Vagina (tissue), 2 donors: ENCODE measurements at regions of chr10 and their contacts with region 1.

Region 1: DNA sequence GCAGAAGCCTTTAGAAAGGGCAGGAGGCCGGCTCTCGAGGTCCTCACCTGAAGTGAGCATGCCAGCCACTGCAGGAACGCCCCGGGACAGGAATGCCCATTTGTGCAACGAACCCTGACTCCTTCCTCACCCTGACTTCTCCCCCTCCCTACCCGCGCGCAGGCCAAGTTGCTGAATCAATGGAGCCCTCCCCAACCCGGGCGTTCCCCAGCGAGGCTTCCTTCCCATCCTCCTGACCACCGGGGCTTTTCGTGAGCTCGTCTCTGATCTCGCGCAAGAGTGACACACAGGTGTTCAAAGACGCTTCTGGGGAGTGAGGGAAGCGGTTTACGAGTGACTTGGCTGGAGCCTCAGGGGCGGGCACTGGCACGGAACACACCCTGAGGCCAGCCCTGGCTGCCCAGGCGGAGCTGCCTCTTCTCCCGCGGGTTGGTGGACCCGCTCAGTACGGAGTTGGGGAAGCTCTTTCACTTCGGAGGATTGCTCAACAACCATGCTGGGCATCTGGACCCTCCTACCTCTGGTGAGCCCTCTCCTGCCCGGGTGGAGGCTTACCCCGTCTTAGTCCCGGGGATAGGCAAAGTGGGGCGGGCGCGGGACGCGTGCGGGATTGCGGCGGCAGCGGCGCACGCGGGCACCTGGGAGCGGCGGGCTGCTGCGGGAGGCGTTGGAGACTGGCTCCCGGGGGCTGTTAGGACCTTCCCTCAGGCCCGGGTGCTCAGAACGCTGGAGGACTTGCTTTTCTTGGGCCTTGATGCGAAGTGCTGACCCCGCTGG is at the start of gene FAS:
- DNase-seq: peak in 1 of 2 donors; percentile 92
- H3K4me3 ChIP-seq: peak within 1 kb of the TSS; percentile 93 to 94
- H3K27ac ChIP-seq: peak within 1 kb of the TSS; percentile 100
- H3K4me1 ChIP-seq: peaks cover 48% of the 10 kb centered on the region
- H3K27me3 ChIP-seq: no peaks in the 10 kb centered on the region
- CTCF ChIP-seq: peak in 1 of 3 experiments; percentile 4
- POLR2A ChIP-seq: peak in 1 of 2 donors; percentile 21
- total RNA-seq, gene FAS: 41.0 TPM

Region 2: GRCh38 chr10:88880282-88881076 is 110.1 kb before region 1 on chr10:
- intact Hi-C with region 1: loop called (anchors 5 kb)
- DNase-seq: peak in 1 of 2 donors; percentile 91
- H3K4me3 ChIP-seq: peak overlapping the region; percentile 73 to 79
- H3K27ac ChIP-seq: peak overlapping the region; percentile 93
- H3K4me1 ChIP-seq: peaks cover 34% of the 10 kb centered on the region
- H3K27me3 ChIP-seq: no peaks in the 10 kb centered on the region
- CTCF ChIP-seq: no peak
- POLR2A ChIP-seq: peak in 1 of 2 donors; percentile 37

Region 3: GRCh38 chr10:88932539-88933256 is 57.9 kb before region 1 on chr10:
- intact Hi-C with region 1: loop called (anchors 5 kb)
- DNase-seq: no peak
- H3K4me3 ChIP-seq: no peak overlapping the region
- H3K27ac ChIP-seq: peak overlapping the region; percentile 61
- H3K4me1 ChIP-seq: peaks cover 26% of the 10 kb centered on the region
- H3K27me3 ChIP-seq: no peaks in the 10 kb centered on the region
- CTCF ChIP-seq: peak; percentile 86 to 99 (median 97)
- POLR2A ChIP-seq: no peak

Region 4: GRCh38 chr10:90560331-90560730 is 1569.8 kb after region 1 on chr10:
- intact Hi-C with region 1: no loop called
- DNase-seq: no peak
- H3K4me3 ChIP-seq: no peak overlapping the region
- H3K27ac ChIP-seq: no peak overlapping the region
- H3K4me1 ChIP-seq: no peaks in the 10 kb centered on the region
- H3K27me3 ChIP-seq: no peaks in the 10 kb centered on the region
- CTCF ChIP-seq: no peak
- POLR2A ChIP-seq: no peak